ENCODE measurements at regions of chr2 and their contacts with region 1.

Region 1: DNA sequence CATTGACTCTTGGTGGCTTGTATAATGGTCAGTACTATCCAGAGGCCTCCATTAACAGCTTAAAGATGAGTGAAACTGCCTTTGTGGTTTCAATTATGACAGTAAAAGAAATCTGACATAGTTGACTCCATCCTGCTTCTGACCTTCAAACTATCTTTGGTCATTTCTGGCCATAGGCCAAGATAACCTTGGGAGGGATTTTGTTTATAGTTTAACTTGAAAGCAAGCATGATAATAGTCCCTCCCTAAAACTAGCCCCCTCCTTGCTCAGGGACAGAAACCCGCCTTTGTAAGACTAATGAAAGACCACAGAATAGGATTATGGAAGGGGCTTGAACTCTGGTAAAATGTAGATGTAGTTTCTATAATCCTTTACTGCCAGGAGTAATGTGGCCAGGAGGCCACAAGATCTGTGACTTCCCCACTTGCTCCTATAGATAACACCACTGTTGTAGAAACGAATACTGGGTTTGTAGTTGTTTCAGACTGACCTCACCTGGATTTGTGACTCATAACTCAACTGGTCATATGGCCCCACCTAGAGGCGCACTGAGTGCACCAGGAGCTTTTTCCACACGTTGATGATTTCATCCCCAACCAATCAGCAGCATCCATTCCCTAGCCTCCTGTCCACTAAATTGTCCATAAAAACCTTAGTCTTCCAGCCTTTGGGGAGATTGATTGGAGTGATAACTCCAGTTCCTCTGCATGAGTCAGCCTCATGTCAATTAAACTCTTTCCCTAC is 8.6 kb upstream of the PLEKHM3 start:
- DNase-seq: no peak

Region 2: GRCh38 chr2:207869784-207870778 is 163.8 kb before region 1 on chr2:
- intact Hi-C with region 1: no loop called
- DNase-seq: no peak

Region 3: GRCh38 chr2:207974216-207974605 is 59.7 kb before region 1 on chr2:
- intact Hi-C with region 1: loop called (anchors 5 kb)
- DNase-seq: no peak